CD4-positive, alpha-beta memory T cell (primary cell): ENCODE measurements at regions of chr17 and their contacts with region 1.

Region 1: GRCh38 chr17:1122533-1123392 is 57.0 kb downstream of the ABR start:
- DNase-seq: peak; percentile 69 to 82 (median 73)
- H3K4me3 ChIP-seq: no peak overlapping the region
- H3K4me3 Mint-ChIP-seq: peak overlapping the region in 2 of 8 donors; percentile 22 to 36
- H3K27ac ChIP-seq: no peak overlapping the region
- H3K27ac Mint-ChIP-seq: peak overlapping the region in 3 of 7 donors; percentile 5 to 68 (median 61)
- H3K4me1 ChIP-seq: peaks cover 12% of the 10 kb centered on the region
- H3K4me1 Mint-ChIP-seq: peaks cover 7 to 14% (median 8%) of the 10 kb centered on the region in 4 donors
- H3K27me3 ChIP-seq: no peaks in the 10 kb centered on the region
- H3K27me3 Mint-ChIP-seq: no peaks in the 10 kb centered on the region

Region 2: DNA sequence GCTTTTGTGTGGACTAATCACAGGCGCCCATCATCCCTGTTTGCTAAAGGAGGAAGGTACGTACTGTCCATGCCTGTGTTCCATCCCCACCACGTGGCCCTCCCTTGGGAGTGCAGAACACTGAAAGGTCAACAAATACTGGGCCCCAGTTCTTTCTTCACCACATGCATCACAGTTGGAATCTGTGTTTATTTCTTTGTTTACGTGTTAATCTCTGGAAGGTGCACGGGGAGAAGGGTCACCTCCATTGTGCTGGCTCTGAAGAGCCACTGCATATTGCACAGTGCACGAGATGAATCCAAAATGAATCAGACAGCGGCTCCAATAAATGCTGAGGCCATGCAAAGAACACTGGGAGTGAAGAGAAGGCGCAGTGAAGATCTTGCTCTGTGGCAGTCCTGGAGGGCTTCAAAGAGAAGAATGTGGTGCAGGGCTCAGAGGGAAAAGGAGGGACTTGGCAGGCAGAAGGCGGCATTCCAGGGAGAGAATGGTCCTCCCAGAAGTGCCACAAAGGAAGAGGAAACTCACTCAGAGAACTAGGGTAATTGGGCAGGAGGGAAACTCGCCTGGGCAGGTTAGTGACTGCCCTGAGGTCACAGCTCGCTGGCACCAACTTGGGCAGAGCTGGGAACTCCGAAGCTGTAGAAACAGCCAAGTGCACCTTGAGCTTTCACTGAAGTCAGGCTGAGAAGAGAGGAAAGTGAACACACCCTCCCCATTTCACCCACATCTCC is 773.9 kb before region 1 on chr17:
- CTCF ChIA-PET with region 1: no interaction called
- POLR2A ChIA-PET with region 1: no interaction called
- intact Hi-C with region 1: no loop called
- DNase-seq: no peak
- H3K4me3 ChIP-seq: no peak overlapping the region
- H3K4me3 Mint-ChIP-seq: no peak overlapping the region
- H3K27ac ChIP-seq: no peak overlapping the region
- H3K27ac Mint-ChIP-seq: no peak overlapping the region
- H3K4me1 ChIP-seq: no peaks in the 10 kb centered on the region
- H3K4me1 Mint-ChIP-seq: peaks cover 0 to 4% (median under 1%) of the 10 kb centered on the region in 4 donors
- H3K27me3 ChIP-seq: no peaks in the 10 kb centered on the region
- H3K27me3 Mint-ChIP-seq: no peaks in the 10 kb centered on the region

Region 3: GRCh38 chr17:1108861-1109605 is 13.7 kb before region 1 on chr17:
- CTCF ChIA-PET with region 1: interaction called, 12 read pairs
- POLR2A ChIA-PET with region 1: interaction called, 7 read pairs
- intact Hi-C with region 1: no loop called
- DNase-seq: peak; percentile 71 to 80 (median 79)
- H3K4me3 ChIP-seq: peak overlapping the region in 1 of 2 donors; percentile 67
- H3K4me3 Mint-ChIP-seq: peak overlapping the region; percentile 86 to 90 (median 88)
- H3K27ac ChIP-seq: peak overlapping the region; percentile 74
- H3K27ac Mint-ChIP-seq: peak overlapping the region; percentile 79 to 92 (median 90)
- H3K4me1 ChIP-seq: peaks cover 25% of the 10 kb centered on the region
- H3K4me1 Mint-ChIP-seq: peaks cover 19 to 53% (median 39%) of the 10 kb centered on the region in 4 donors
- H3K27me3 ChIP-seq: no peaks in the 10 kb centered on the region
- H3K27me3 Mint-ChIP-seq: no peaks in the 10 kb centered on the region

Region 4: DNA sequence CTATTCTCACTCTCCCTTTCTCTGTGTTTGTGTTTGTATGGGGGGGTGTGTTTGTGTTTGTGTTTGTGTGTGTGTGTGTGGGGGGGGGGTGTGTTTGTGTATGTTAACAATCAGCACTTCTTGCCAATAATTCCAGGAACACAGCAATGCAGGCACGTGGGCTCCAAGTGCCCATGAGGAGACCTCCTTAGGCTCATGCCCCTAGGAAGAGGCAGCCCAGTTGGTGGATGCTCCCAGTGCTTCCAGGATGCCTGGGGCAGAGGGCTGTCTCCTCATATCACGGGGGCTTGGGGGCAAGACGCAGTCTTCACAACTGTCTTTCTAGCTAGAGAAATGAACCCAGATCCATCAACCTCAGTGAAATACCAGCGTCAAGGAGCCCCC is 47.2 kb after region 1 on chr17:
- CTCF ChIA-PET with region 1: no interaction called
- POLR2A ChIA-PET with region 1: no interaction called
- intact Hi-C with region 1: no loop called
- DNase-seq: no peak
- H3K4me3 ChIP-seq: no peak overlapping the region
- H3K4me3 Mint-ChIP-seq: no peak overlapping the region
- H3K27ac ChIP-seq: no peak overlapping the region
- H3K27ac Mint-ChIP-seq: peak overlapping the region in 1 of 7 donors; percentile 69
- H3K4me1 ChIP-seq: no peaks in the 10 kb centered on the region
- H3K4me1 Mint-ChIP-seq: peaks cover 1 to 11% (median 4%) of the 10 kb centered on the region in 4 donors
- H3K27me3 ChIP-seq: no peaks in the 10 kb centered on the region
- H3K27me3 Mint-ChIP-seq: no peaks in the 10 kb centered on the region

Region 5: GRCh38 chr17:1179818-1180742 is 57.3 kb after region 1 on chr17 and contains the start of gene ABR:
- CTCF ChIA-PET with region 1: interaction called, 176 read pairs
- POLR2A ChIA-PET with region 1: no interaction called
- intact Hi-C with region 1: loop called (anchors 2 kb)
- DNase-seq: peak; percentile 51 to 76 (median 54)
- H3K4me3 ChIP-seq: peak within 1 kb of the TSS in 1 of 2 donors; percentile 38
- H3K4me3 Mint-ChIP-seq: peak within 1 kb of the TSS; percentile 38 to 84 (median 80)
- H3K27ac ChIP-seq: peak within 1 kb of the TSS; percentile 35
- H3K27ac Mint-ChIP-seq: peak within 1 kb of the TSS in 3 of 7 donors; percentile 57 to 81 (median 63)
- H3K4me1 ChIP-seq: peaks cover 10% of the 10 kb centered on the region
- H3K4me1 Mint-ChIP-seq: peaks cover 2 to 33% (median 15%) of the 10 kb centered on the region in 4 donors
- H3K27me3 ChIP-seq: no peaks in the 10 kb centered on the region
- H3K27me3 Mint-ChIP-seq: no peaks in the 10 kb centered on the region
- total RNA-seq, gene ABR: 139 to 157 TPM

Region 6: DNA sequence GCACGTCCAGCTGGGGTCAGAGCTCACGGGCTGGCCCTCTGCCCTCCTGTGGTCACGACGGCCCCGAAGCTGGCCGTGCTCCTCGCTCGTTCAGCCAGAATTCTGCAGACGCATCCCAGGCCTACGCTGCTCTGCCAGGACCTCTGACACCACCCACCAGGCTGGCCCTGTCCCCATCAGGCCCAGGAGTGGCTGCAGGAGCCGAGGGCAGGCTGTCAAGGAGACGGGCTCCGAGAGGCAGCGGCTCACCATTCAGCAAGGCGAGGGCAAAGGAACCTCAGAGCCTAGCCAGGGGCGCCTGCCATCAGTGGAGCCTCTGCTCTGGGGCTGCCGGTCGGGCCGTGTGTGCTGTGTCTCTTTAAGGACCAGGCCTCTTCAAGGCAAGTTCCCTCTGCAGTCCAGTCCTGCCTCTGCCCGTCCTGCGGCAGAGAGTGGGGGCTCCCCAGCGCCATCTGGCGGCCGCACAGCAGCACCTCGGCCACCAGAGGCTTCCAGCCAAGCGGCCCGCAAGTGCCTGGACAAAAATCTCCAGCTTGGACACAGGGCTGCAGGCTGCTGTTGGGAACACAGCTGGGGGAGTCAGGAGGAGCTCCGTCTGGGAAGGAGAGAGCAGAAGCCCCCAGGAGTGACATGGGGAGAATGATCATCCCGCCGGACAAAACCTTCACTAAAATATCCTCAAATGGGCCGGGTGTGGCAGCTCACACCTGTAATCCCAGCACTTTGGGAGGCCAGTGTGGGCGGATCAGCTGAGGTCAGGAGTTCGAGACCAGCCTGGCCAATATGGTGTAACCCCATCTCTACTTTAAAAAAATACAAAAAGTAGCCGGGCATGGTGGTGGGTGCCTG is 64.4 kb after region 1 on chr17:
- CTCF ChIA-PET with region 1: interaction called, 176 read pairs
- POLR2A ChIA-PET with region 1: interaction called, 5 read pairs
- intact Hi-C with region 1: loop called (anchors 2 kb)
- DNase-seq: peak; percentile 70 to 75 (median 73)
- H3K4me3 ChIP-seq: no peak overlapping the region
- H3K4me3 Mint-ChIP-seq: no peak overlapping the region
- H3K27ac ChIP-seq: no peak overlapping the region
- H3K27ac Mint-ChIP-seq: peak overlapping the region in 3 of 7 donors; percentile 46 to 66 (median 46)
- H3K4me1 ChIP-seq: peaks cover 6% of the 10 kb centered on the region
- H3K4me1 Mint-ChIP-seq: peaks cover 3 to 16% (median 7%) of the 10 kb centered on the region in 4 donors
- H3K27me3 ChIP-seq: no peaks in the 10 kb centered on the region
- H3K27me3 Mint-ChIP-seq: peaks cover 4 to 8% of the 10 kb centered on the region in 2 donors

Region 7: GRCh38 chr17:1197781-1198490 is 75.2 kb after region 1 on chr17:
- CTCF ChIA-PET with region 1: interaction called, 176 read pairs
- POLR2A ChIA-PET with region 1: no interaction called
- intact Hi-C with region 1: no loop called
- DNase-seq: peak; percentile 61 to 77 (median 72)
- H3K4me3 ChIP-seq: no peak overlapping the region
- H3K4me3 Mint-ChIP-seq: peak overlapping the region; percentile 10 to 81 (median 62)
- H3K27ac ChIP-seq: no peak overlapping the region
- H3K27ac Mint-ChIP-seq: peak overlapping the region; percentile 22 to 88 (median 75)
- H3K4me1 ChIP-seq: peaks cover 58% of the 10 kb centered on the region
- H3K4me1 Mint-ChIP-seq: peaks cover 32 to 53% (median 42%) of the 10 kb centered on the region in 4 donors
- H3K27me3 ChIP-seq: no peaks in the 10 kb centered on the region
- H3K27me3 Mint-ChIP-seq: no peaks in the 10 kb centered on the region

Region 8: DNA sequence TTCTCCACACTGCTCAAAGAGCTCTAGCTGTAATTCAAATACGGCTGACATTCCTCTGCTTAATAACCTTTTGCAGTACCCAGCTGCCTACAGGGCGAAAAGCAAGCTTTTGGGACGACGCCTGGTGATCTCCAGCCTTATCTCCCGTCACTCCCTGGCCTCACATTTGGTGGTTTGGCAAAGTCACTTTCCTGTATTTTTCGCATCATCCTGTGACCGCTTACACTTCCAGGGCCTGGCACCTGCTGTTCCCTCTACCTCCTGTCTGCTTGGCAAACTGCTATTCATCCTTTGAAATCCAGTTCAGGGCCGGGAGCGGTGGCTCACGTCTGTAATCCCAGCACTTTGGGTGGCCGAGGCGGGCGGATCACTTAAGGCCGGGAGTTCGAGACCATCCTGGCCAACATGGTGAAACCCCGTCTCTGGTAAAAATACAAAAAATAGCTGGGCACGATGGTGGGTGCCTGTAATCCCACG is 144.7 kb after region 1 on chr17:
- CTCF ChIA-PET with region 1: no interaction called
- POLR2A ChIA-PET with region 1: no interaction called
- intact Hi-C with region 1: loop called (anchors 5 kb)
- DNase-seq: peak in 1 of 5 donors; percentile 12
- H3K4me3 ChIP-seq: peak overlapping the region in 1 of 2 donors; percentile 52
- H3K4me3 Mint-ChIP-seq: peak overlapping the region; percentile 73 to 85 (median 79)
- H3K27ac ChIP-seq: no peak overlapping the region
- H3K27ac Mint-ChIP-seq: peak overlapping the region; percentile 34 to 82 (median 70)
- H3K4me1 ChIP-seq: peaks cover 8% of the 10 kb centered on the region
- H3K4me1 Mint-ChIP-seq: peaks cover 0 to 15% (median 4%) of the 10 kb centered on the region in 4 donors
- H3K27me3 ChIP-seq: no peaks in the 10 kb centered on the region
- H3K27me3 Mint-ChIP-seq: peaks cover 3 to 11% of the 10 kb centered on the region in 2 donors